HepG2 (cell line): ENCODE measurements at regions of chr9 and their contacts with region 1.

Region 1: GRCh38 chr9:76451234-76451633 is 7.7 kb upstream of the GCNT1 start:
- DNase-seq: no peak
- ATAC-seq: no peak
- H3K4me3 ChIP-seq: no peak overlapping the region
- H3K27ac ChIP-seq: no peak overlapping the region
- H3K4me1 ChIP-seq: peaks cover 6% of the 10 kb centered on the region
- H3K27me3 ChIP-seq: no peaks in the 10 kb centered on the region
- CTCF ChIP-seq: no peak
- EP300 ChIP-seq: no peak
- POLR2A ChIP-seq: no peak
- RAD21 ChIP-seq: no peak

Region 2: DNA sequence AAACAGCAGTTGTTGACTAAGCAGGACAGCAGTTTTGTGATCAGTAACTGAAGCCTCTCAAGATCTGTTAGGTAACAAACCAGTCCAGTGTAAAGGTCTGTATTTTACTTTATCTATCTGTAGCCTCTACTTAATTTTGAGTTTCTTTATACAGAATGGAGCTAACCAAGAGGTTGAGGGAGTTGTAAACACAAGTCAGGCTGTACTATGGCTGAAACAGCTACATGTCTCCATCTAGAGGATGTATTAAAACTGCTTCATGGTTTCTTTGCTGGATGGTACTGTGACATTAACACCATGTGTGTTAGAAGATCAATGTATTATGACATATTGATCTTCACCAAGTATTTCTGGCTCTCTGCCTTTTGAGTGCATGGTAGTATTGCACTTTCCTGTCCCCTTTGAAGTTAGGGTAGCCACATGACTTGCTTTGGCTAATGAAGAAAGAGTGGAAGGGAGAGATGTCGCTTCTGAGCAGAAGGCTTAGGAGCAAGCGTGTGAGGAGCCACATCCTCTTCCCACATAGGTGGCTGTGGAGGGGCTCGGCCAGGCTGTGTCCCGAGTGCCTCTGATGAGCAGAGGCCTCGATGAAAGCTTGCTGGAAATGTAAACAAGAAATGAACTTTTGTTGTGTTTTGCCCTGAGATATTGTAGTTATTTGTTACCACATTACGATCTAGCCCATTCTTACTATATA is 207.4 kb after region 1 on chr9:
- CTCF ChIA-PET with region 1: interaction called, 25 read pairs
- POLR2A ChIA-PET with region 1: no interaction called
- in situ Hi-C with region 1: loop called (anchors 5 kb)
- intact Hi-C with region 1: loop called (anchors 1 kb)
- DNase-seq: peak; percentile 38
- ATAC-seq: peak; percentile 95
- H3K4me3 ChIP-seq: no peak overlapping the region
- H3K27ac ChIP-seq: no peak overlapping the region
- H3K4me1 ChIP-seq: no peaks in the 10 kb centered on the region
- H3K27me3 ChIP-seq: no peaks in the 10 kb centered on the region
- CTCF ChIP-seq: peak; percentile 75
- EP300 ChIP-seq: no peak
- POLR2A ChIP-seq: no peak
- RAD21 ChIP-seq: peak; percentile 58